ENCODE measurements at regions of chr6 and their contacts with region 1.

Region 1: GRCh38 chr6:148578245-148578732 is 168.5 kb upstream of the UST start:
- DNase-seq: peak; percentile 83
- ATAC-seq: peak; percentile 100
- H3K4me3 ChIP-seq: no peak overlapping the region
- H3K4me3 Mint-ChIP-seq: no peak overlapping the region
- H3K27ac ChIP-seq: no peak overlapping the region
- H3K27ac Mint-ChIP-seq: no peak overlapping the region
- H3K4me1 ChIP-seq: peaks cover 0 to 5% of the 10 kb centered on the region in 2 donors
- H3K4me1 Mint-ChIP-seq: peaks cover 5% of the 10 kb centered on the region
- H3K27me3 ChIP-seq: no peaks in the 10 kb centered on the region
- H3K27me3 Mint-ChIP-seq: peaks cover 3% of the 10 kb centered on the region
- CTCF ChIP-seq: peak; percentile 86

Region 2: DNA sequence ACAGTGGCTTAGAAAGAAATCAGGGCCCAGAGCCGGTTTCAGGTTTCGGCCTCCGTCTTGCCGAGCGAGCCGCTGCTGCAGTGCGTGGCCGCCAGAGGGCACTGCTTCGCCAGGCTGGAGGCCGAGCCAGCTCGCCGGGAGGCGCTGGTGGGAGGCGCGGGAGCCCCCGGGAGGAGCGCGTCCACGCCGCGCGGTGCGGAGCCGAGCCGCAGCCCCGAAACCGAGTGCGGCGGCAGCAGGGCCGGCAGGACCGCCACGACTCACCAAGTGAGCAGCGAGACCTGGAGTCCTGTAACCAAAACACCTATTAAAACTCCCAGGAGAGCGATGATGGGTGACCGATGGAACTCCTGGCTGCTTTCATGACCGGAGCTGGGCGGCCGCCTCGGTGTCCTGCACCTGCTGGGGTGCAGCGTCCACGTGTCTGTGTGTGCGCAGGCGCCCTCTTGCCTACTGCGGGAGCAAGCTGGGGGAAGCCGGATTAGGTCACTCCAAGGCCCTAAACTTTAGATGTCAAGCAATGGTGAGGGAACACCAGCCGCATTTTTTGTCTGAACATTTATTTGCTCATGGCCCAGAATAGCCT is 18.3 kb before region 1 on chr6:
- CTCF ChIA-PET with region 1: interaction called, 13 read pairs
- POLR2A ChIA-PET with region 1: no interaction called
- intact Hi-C with region 1: no loop called
- DNase-seq: peak; percentile 82
- ATAC-seq: peak; percentile 88
- H3K4me3 ChIP-seq: peak overlapping the region in 4 of 5 experiments; percentile 26 to 64 (median 52)
- H3K4me3 Mint-ChIP-seq: peak overlapping the region; percentile 60
- H3K27ac ChIP-seq: no peak overlapping the region
- H3K27ac Mint-ChIP-seq: no peak overlapping the region
- H3K4me1 ChIP-seq: peaks cover 14 to 32% of the 10 kb centered on the region in 2 donors
- H3K4me1 Mint-ChIP-seq: peaks cover 23% of the 10 kb centered on the region
- H3K27me3 ChIP-seq: peaks cover 0 to 2% (median 0%) of the 10 kb centered on the region in 4 experiments
- H3K27me3 Mint-ChIP-seq: no peaks in the 10 kb centered on the region
- CTCF ChIP-seq: peak; percentile 98

Region 3: DNA sequence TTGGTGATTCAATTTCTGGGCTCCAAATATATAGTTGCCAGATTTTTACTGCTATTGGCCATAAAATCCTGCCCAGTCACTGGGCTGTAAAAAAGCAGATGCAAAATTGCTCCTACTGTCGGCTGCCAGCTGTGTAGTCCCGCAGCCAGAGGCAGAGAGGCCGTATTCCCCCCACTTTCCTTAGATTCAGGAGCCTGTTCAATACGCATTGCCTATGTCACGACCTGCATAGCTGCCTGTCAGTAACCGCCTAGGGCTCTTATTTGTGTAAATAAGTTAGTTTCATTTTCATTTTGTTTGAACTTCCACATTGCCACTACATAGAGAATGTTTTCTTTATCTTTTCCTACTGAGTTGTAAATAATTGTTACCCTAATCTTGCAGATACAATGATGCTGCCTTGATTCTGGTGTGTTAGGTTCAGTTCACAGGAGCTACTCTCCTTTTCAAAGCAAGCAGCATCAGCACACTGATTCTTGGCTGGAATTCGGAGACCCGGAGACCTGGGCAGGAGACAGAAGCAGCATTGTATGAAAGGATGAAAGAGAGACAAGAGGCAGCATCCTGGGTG is 122.5 kb after region 1 on chr6:
- CTCF ChIA-PET with region 1: interaction called, 33 read pairs
- POLR2A ChIA-PET with region 1: no interaction called
- intact Hi-C with region 1: loop called (anchors 1 kb)
- DNase-seq: peak; percentile 56
- ATAC-seq: peak; percentile 65
- H3K4me3 ChIP-seq: peak overlapping the region; percentile 16 to 59 (median 51)
- H3K4me3 Mint-ChIP-seq: peak overlapping the region; percentile 82
- H3K27ac ChIP-seq: peak overlapping the region; percentile 38 to 44
- H3K27ac Mint-ChIP-seq: peak overlapping the region; percentile 47
- H3K4me1 ChIP-seq: peaks cover 13% of the 10 kb centered on the region in 2 donors
- H3K4me1 Mint-ChIP-seq: peaks cover 25% of the 10 kb centered on the region
- H3K27me3 ChIP-seq: no peaks in the 10 kb centered on the region
- H3K27me3 Mint-ChIP-seq: no peaks in the 10 kb centered on the region
- CTCF ChIP-seq: no peak

Region 4: GRCh38 chr6:148776321-148777308 is 198.3 kb after region 1 on chr6:
- CTCF ChIA-PET with region 1: interaction called, 12 read pairs
- POLR2A ChIA-PET with region 1: no interaction called
- intact Hi-C with region 1: no loop called
- DNase-seq: no peak
- ATAC-seq: no peak
- H3K4me3 ChIP-seq: no peak overlapping the region
- H3K4me3 Mint-ChIP-seq: peak overlapping the region; percentile 2
- H3K27ac ChIP-seq: no peak overlapping the region
- H3K27ac Mint-ChIP-seq: peak overlapping the region; percentile 32
- H3K4me1 ChIP-seq: peaks cover 35% of the 10 kb centered on the region in 2 donors
- H3K4me1 Mint-ChIP-seq: peaks cover 52% of the 10 kb centered on the region
- H3K27me3 ChIP-seq: no peaks in the 10 kb centered on the region
- H3K27me3 Mint-ChIP-seq: no peaks in the 10 kb centered on the region
- CTCF ChIP-seq: no peak

Region 5: GRCh38 chr6:148959004-148959403 is 380.7 kb after region 1 on chr6:
- CTCF ChIA-PET with region 1: interaction called, 18 read pairs
- POLR2A ChIA-PET with region 1: no interaction called
- intact Hi-C with region 1: no loop called
- DNase-seq: no peak
- ATAC-seq: no peak
- H3K4me3 ChIP-seq: no peak overlapping the region
- H3K4me3 Mint-ChIP-seq: no peak overlapping the region
- H3K27ac ChIP-seq: no peak overlapping the region
- H3K27ac Mint-ChIP-seq: no peak overlapping the region
- H3K4me1 ChIP-seq: no peaks in the 10 kb centered on the region
- H3K4me1 Mint-ChIP-seq: peaks cover 10% of the 10 kb centered on the region
- H3K27me3 ChIP-seq: no peaks in the 10 kb centered on the region
- H3K27me3 Mint-ChIP-seq: no peaks in the 10 kb centered on the region
- CTCF ChIP-seq: no peak

Region 6: DNA sequence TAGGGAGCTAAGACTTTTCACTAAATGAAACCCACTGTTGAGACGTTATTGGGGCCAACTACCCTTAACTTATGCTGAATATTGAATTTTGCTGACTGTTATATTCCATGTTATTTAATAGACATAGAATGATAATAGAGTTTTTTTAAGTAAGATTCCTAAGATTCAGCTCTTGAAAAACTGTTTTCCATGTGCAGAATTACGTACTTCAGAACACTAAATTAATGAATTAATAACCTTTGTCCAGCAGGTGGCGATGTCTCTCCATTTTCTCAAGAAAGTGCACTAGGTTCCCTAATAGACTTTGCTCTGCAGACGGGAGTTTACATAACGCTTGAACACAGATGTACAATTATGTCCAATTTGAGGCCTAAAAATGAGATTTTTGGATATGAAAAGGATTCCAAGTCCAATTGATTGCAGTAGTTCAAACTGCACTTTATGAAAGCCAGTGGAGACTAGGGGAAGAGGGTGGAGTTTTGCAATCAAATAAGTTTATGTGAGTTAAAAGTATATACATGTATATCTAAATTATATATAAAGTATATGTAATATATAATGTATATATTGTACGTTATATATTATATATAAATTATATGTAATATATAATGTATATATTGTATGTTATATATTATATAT is 450.6 kb after region 1 on chr6:
- CTCF ChIA-PET with region 1: interaction called, 48 read pairs
- POLR2A ChIA-PET with region 1: no interaction called
- intact Hi-C with region 1: loop called (anchors 1 kb)
- DNase-seq: peak; percentile 88
- ATAC-seq: peak; percentile 53
- H3K4me3 ChIP-seq: no peak overlapping the region
- H3K4me3 Mint-ChIP-seq: no peak overlapping the region
- H3K27ac ChIP-seq: no peak overlapping the region
- H3K27ac Mint-ChIP-seq: no peak overlapping the region
- H3K4me1 ChIP-seq: peaks cover 3 to 19% of the 10 kb centered on the region in 2 donors
- H3K4me1 Mint-ChIP-seq: peaks cover 28% of the 10 kb centered on the region
- H3K27me3 ChIP-seq: no peaks in the 10 kb centered on the region
- H3K27me3 Mint-ChIP-seq: no peaks in the 10 kb centered on the region
- CTCF ChIP-seq: peak; percentile 92

Measured in B cell (primary cell).